Lower leg skin (tissue), 4 donors: ENCODE measurements at regions of chr19 and their contacts with region 1.

Region 1: GRCh38 chr19:35931161-35931873 is 4.9 kb upstream of the LRFN3 start:
- DNase-seq: peak; percentile 99 to 100
- H3K4me3 ChIP-seq: no peak overlapping the region
- CTCF ChIP-seq: peak in 1 of 3 donors; percentile 97
- POLR2A ChIP-seq: peak in 1 of 2 donors; percentile 26

Region 2: GRCh38 chr19:35693830-35694599 is 237.3 kb before region 1 on chr19:
- intact Hi-C with region 1: loop called (anchors 10 kb)
- DNase-seq: peak; percentile 72 to 96
- H3K4me3 ChIP-seq: no peak overlapping the region
- CTCF ChIP-seq: peak in 2 of 3 donors; percentile 5 to 98
- POLR2A ChIP-seq: no peak

Region 3: GRCh38 chr19:35879770-35880317 is 51.5 kb before region 1 on chr19:
- intact Hi-C with region 1: loop called (anchors 5 kb)
- DNase-seq: peak; percentile 81 to 96
- H3K4me3 ChIP-seq: no peak overlapping the region
- CTCF ChIP-seq: no peak
- POLR2A ChIP-seq: no peak

Region 4: DNA sequence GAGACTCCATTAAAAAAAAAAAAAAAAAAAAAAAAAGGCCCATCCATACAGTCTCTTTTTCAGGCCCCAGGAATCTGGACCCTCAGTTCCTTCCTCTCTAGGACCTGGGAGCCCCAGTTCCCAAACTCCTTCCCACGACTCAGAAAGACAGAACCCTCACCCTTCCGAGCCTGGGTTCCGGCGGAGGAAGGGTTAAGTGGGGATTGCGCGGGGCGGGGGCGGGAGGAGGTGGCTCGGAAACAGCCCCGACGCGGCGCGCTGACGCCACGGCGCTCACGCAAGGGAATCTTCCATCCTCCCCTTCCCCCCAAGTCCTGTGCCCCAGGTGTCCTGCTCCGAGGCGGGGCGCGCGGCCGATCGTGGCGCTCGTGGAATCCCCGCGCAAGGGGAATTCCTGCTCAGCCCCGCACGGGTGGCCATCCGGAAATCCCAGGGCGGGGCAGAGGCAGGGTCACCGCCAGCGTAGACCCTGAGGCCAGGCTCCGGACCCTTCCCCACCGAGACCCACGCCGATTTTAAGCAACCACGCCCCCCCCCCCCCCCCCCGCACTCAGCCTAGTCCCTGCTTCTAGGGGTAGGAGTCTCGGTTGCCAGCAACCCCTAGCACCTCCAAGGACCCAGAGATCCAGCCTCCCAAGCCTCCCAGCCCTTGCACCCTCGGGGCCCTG is 31.6 kb before region 1 on chr19:
- intact Hi-C with region 1: loop called (anchors 5 kb)
- DNase-seq: peak; percentile 68 to 95
- H3K4me3 ChIP-seq: peak overlapping the region; percentile 41
- CTCF ChIP-seq: no peak
- POLR2A ChIP-seq: no peak